ENCODE measurements at regions of chr12 and their contacts with region 1.

Region 1: GRCh38 chr12:69679119-69679518 is 20.0 kb downstream of the BEST3 start:
- DNase-seq: no peak
- H3K4me3 ChIP-seq: no peak overlapping the region
- H3K27ac ChIP-seq: no peak overlapping the region
- H3K4me1 ChIP-seq: no peaks in the 10 kb centered on the region
- H3K27me3 ChIP-seq: no peaks in the 10 kb centered on the region
- CTCF ChIP-seq: no peak
- EP300 ChIP-seq: no peak
- POLR2A ChIP-seq: no peak

Region 2: DNA sequence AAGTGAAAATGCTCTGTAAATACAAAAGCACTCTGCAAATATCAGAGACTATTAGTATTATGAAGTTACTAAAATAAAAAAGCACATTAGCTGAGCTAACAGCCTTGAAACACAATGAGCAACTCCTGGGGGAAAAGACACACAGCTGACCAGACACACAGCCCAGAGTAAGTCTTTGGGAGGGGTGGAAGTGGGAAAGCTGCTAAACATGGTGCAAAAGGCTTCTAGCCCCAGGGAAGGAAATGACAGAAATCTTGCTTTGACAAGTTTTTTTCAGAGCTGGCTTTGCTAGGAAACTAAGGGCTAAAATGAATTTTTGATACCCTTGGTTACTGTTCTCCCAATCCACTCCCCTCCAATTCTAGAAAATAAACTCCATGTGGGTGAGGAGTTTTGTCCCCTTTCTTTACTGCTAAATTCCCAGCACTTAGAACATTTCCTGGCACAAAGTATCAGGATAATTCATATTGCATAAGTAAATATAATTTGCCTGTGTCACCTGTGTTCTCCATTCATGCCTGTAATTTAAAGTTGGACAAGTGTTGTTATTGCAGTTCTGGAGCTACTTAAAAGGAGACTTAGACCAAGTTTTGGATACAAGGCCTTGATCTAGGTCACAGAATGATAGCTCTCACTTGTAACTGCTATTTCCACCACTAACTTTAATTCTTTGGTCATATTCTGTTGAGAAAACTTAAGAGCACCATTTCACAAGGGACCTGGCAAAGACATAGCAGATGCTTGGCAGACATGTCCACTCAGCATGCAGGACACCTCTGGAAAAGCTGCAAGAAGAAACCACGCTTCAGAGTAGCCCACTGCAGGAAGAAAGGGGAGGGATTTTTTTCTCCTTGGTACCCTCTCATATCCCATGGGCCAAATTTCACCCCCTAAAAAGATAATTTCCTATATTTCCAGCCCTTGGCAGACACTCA is 40.5 kb after region 1 on chr12:
- intact Hi-C with region 1: loop called in 1 of 4 experiments (anchors 2 kb)
- DNase-seq: no peak
- H3K4me3 ChIP-seq: no peak overlapping the region
- H3K27ac ChIP-seq: no peak overlapping the region
- H3K4me1 ChIP-seq: no peaks in the 10 kb centered on the region
- H3K27me3 ChIP-seq: no peaks in the 10 kb centered on the region
- CTCF ChIP-seq: no peak
- EP300 ChIP-seq: no peak
- POLR2A ChIP-seq: no peak